GM12878 (cell line): ENCODE measurements at regions of chr2 and their contacts with region 1.

Region 1: GRCh38 chr2:85635636-85636035 is 19.6 kb downstream of the USP39 start:
- DNase-seq: no peak
- ATAC-seq: no peak
- H3K4me3 ChIP-seq: no peak overlapping the region
- H3K27ac ChIP-seq: no peak overlapping the region
- H3K4me1 ChIP-seq: no peaks in the 10 kb centered on the region
- H3K27me3 ChIP-seq: no peaks in the 10 kb centered on the region
- CTCF ChIP-seq: no peak
- EP300 ChIP-seq: no peak
- POLR2A ChIP-seq: no peak
- RAD21 ChIP-seq: no peak

Region 2: DNA sequence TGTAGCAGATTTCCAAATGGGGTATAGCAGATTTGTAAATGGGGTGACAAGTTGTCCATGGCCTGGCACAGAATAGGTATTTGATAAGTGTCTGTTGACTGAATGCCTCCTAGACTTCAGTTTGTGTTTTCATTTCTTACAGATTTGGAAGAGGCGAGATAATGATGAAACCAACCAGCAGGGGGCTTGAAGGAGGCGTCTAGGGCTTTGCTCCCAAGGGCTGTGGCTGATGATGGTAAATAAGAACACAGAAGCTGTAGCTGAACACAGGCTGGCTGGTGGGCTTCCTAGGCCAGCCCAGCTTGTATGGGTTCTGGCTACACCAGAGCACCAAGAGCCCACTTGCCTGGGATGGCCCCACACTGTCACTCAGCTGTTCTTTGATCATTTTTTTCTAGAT is 13.0 kb after region 1 on chr2:
- CTCF ChIA-PET with region 1: interaction called, 36 read pairs
- POLR2A ChIA-PET with region 1: interaction called, 5 read pairs
- RAD21 ChIA-PET with region 1: interaction called, 16 read pairs
- SMC1A ChIA-PET with region 1: interaction called, 11 read pairs
- in situ Hi-C with region 1: no loop called
- intact Hi-C with region 1: no loop called
- DNase-seq: no peak
- ATAC-seq: peak; percentile 83
- H3K4me3 ChIP-seq: no peak overlapping the region
- H3K27ac ChIP-seq: no peak overlapping the region
- H3K4me1 ChIP-seq: peaks cover 13% of the 10 kb centered on the region
- H3K27me3 ChIP-seq: no peaks in the 10 kb centered on the region
- CTCF ChIP-seq: peak; percentile 28 to 52 (median 49); a peak in 5 of 6 replicates
- EP300 ChIP-seq: no peak
- POLR2A ChIP-seq: no peak
- RAD21 ChIP-seq: peak; percentile 33

Region 3: GRCh38 chr2:85655961-85656417 is 20.4 kb after region 1 on chr2:
- CTCF ChIA-PET with region 1: interaction called, 19 read pairs
- POLR2A ChIA-PET with region 1: interaction called, 5 read pairs
- RAD21 ChIA-PET with region 1: interaction called, 16 read pairs
- SMC1A ChIA-PET with region 1: interaction called, 4 read pairs
- in situ Hi-C with region 1: no loop called
- intact Hi-C with region 1: no loop called
- DNase-seq: no peak
- ATAC-seq: no peak
- H3K4me3 ChIP-seq: no peak overlapping the region
- H3K27ac ChIP-seq: no peak overlapping the region
- H3K4me1 ChIP-seq: no peaks in the 10 kb centered on the region
- H3K27me3 ChIP-seq: no peaks in the 10 kb centered on the region
- CTCF ChIP-seq: no peak
- EP300 ChIP-seq: no peak
- POLR2A ChIP-seq: no peak
- RAD21 ChIP-seq: no peak

Region 4: DNA sequence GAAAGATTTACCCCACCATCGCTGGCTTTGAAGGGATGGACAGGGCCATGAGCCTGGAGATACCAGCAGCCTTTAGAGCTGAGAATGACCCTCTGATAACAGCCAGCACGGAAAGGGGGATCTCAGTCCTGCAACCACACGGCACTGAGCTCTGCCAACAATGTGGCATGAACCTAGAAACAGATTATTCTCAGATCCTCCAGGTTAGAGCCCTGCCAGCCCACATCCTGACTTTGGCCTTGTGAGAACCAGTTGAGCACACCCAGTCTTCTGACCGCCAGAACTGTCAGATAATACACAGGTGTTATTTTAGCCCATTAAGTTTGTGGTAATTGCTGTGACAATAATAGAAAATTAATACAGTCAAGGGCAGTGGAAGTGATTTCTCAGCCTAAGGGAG is 49.2 kb after region 1 on chr2:
- CTCF ChIA-PET with region 1: interaction called, 12 read pairs
- POLR2A ChIA-PET with region 1: no interaction called
- RAD21 ChIA-PET with region 1: interaction called, 8 read pairs
- SMC1A ChIA-PET with region 1: interaction called, 4 read pairs
- in situ Hi-C with region 1: no loop called
- intact Hi-C with region 1: no loop called
- DNase-seq: peak; percentile 61
- ATAC-seq: peak; percentile 91
- H3K4me3 ChIP-seq: no peak overlapping the region
- H3K27ac ChIP-seq: no peak overlapping the region
- H3K4me1 ChIP-seq: no peaks in the 10 kb centered on the region; the same call in 1 of the 2 replicates
- H3K27me3 ChIP-seq: no peaks in the 10 kb centered on the region
- CTCF ChIP-seq: no peak
- EP300 ChIP-seq: no peak
- POLR2A ChIP-seq: no peak
- RAD21 ChIP-seq: no peak

Region 5: GRCh38 chr2:85712849-85713602 is 77.4 kb after region 1 on chr2:
- CTCF ChIA-PET with region 1: interaction called, 162 read pairs
- POLR2A ChIA-PET with region 1: no interaction called
- RAD21 ChIA-PET with region 1: interaction called, 42 read pairs
- SMC1A ChIA-PET with region 1: interaction called, 71 read pairs
- in situ Hi-C with region 1: loop called (anchors 5 kb)
- intact Hi-C with region 1: no loop called
- DNase-seq: no peak
- ATAC-seq: no peak
- H3K4me3 ChIP-seq: no peak overlapping the region
- H3K27ac ChIP-seq: no peak overlapping the region
- H3K4me1 ChIP-seq: no peaks in the 10 kb centered on the region
- H3K27me3 ChIP-seq: no peaks in the 10 kb centered on the region; a peak in 1 of 4 replicates
- CTCF ChIP-seq: no peak
- EP300 ChIP-seq: no peak
- POLR2A ChIP-seq: no peak
- RAD21 ChIP-seq: no peak

Region 6: DNA sequence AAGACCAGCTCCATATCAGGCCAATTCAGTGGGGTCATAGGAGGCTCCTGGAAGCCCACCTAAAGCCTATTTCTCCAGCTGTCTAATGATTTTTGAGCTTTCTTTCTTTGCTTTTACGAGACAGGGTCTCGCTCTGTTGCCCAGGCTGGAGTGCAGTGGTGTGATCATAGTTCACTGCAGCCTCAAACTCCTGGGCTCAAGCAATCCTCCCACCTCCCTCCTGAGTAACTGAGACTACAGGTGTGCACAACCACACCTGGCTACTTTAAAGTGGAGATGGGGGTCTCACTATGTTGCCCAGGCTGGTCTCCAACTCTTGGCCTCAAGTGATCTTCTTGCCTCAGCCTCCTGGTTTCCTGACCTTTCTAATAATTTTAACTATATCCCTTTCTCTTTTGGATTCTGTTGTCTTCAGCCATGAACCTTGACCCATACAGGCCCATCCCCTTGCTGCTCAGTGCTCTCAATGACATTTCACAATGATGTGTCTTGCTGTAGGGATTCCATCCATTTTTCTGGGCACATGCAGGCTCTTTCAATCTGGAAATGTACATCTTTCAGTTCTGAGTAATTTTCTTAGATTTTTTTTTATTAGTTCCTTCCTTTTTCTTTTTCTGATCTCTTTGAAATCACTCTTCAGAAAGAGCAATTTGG is 88.2 kb after region 1 on chr2:
- CTCF ChIA-PET with region 1: interaction called, 28 read pairs
- POLR2A ChIA-PET with region 1: no interaction called
- RAD21 ChIA-PET with region 1: interaction called, 15 read pairs
- SMC1A ChIA-PET with region 1: interaction called, 12 read pairs
- in situ Hi-C with region 1: no loop called
- intact Hi-C with region 1: loop called (anchors 5 kb)
- DNase-seq: no peak
- ATAC-seq: no peak
- H3K4me3 ChIP-seq: no peak overlapping the region
- H3K27ac ChIP-seq: no peak overlapping the region
- H3K4me1 ChIP-seq: no peaks in the 10 kb centered on the region
- H3K27me3 ChIP-seq: peaks cover 0 to 2% of the 10 kb centered on the region in 2 experiments; a peak in 1 of 4 replicates
- CTCF ChIP-seq: no peak
- EP300 ChIP-seq: no peak
- POLR2A ChIP-seq: no peak
- RAD21 ChIP-seq: no peak

Region 7: GRCh38 chr2:85813982-85814801 is 178.6 kb after region 1 on chr2:
- CTCF ChIA-PET with region 1: interaction called, 31 read pairs
- POLR2A ChIA-PET with region 1: no interaction called
- RAD21 ChIA-PET with region 1: interaction called, 25 read pairs
- SMC1A ChIA-PET with region 1: interaction called, 17 read pairs
- in situ Hi-C with region 1: no loop called
- intact Hi-C with region 1: loop called (anchors 5 kb)
- DNase-seq: peak; percentile 30
- ATAC-seq: peak; percentile 99
- H3K4me3 ChIP-seq: no peak overlapping the region
- H3K27ac ChIP-seq: no peak overlapping the region
- H3K4me1 ChIP-seq: no peaks in the 10 kb centered on the region
- H3K27me3 ChIP-seq: no peaks in the 10 kb centered on the region
- CTCF ChIP-seq: peak; percentile 94 to 98 (median 95); a peak in 5 of 6 replicates
- EP300 ChIP-seq: no peak
- POLR2A ChIP-seq: no peak
- RAD21 ChIP-seq: peak; percentile 94